Sciatic nerve (tissue), 2 donors: ENCODE measurements at regions of chr18 and their contacts with region 1.

Region 1: DNA sequence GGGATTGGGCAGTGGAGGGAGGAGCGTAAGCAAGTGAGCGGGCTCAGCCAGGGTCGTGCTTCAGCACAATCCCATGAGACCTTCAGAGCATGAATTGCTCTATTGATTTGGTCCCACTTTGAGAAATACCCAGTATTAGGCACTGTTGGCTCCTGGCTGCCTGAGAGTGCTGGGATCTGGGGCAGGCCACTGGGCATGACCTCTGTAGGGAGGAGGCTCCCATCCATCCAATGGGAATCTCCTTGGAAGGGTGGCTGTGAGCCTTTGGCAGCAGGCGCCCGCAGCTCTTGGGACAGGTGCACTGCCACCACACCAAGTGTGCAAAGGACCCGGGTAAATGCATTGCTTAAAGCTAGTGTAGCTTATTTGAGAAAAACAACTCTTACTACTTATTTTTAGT is 137.5 kb downstream of the LDLRAD4 start:
- DNase-seq: no peak
- ATAC-seq: no peak

Region 2: DNA sequence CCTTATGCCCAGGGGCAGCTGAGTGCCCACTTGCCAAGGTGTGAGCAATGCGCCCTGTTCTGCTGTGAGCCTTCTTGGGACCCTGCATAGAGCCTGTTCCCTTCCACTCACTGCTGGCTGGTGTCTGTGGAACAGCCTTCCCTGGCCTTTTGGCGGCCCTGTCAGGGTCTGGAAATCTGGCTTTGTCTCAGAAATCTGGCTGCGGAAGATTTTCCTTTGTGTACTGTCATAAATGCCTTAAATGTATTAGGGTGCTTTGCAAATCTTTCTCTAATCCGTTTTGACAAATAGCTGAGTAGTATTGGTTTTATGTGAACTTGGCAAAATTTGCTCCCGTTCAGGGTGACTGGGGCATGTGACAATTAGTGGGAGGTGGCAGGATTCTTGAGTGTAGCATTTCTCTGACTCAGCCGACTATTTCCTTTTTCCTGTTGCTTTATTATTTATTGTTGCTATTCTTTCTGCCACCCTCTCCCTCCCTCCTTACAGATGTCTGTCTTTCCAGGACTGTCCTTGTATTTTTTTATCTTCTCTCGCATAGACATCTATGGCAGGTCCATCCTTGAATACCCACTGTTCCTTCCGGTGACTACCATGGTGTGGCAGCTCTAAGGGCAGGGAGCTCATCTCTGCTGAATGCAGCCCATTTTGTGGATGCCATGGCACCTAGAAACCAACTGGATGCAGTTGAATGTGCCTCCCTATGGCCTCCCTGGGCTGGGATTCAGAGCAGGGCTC is 95.7 kb before region 1 on chr18:
- intact Hi-C with region 1: no loop called
- DNase-seq: peak; percentile 37
- ATAC-seq: peak; percentile 66

Region 3: DNA sequence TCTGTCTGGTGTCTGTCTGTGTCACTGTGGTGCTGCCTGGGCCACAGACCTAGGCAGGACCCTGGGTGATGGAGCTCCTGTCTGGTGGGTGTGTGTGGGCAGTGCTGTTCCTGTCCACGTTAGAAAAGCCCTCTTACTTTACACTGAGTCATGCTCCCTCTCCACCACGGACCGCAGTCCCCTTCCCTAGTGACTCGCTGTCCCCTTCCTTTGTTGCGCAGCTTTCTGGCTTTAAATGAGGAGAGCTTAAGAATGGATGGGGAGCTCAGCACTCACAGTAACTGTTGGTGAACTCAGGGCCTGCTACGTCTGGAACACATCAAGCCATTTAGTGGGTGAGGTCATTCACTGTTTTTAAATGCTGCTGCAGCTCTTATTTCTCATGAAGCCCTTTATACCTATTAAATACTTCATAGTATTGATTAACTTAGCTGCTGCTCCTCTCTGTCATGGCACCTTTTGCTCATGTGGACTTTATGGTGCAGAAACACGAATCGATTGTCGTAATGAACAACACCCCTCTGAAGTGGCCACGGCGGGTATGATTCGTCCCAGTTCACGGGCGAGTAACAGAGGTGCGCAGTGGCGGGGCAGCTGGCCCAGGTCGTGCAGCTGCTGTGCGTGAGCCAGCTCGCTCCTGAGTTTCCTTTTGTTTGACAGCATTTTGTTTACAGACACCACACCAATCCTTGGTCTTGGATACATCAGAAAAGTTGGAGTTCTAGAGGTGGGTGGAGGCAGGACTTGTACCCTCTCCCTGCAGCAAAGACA is 37.1 kb before region 1 on chr18:
- intact Hi-C with region 1: no loop called
- DNase-seq: no peak
- ATAC-seq: peak; percentile 63

Region 4: GRCh38 chr18:13394801-13395200 is 38.8 kb after region 1 on chr18:
- intact Hi-C with region 1: no loop called
- DNase-seq: no peak
- ATAC-seq: no peak

Region 5: GRCh38 chr18:13435596-13436327 is 79.7 kb after region 1 on chr18:
- intact Hi-C with region 1: loop called (anchors 2 kb)
- DNase-seq: no peak
- ATAC-seq: peak; percentile 66